ENCODE measurements at regions of chr11 and their contacts with region 1.

Region 1: DNA sequence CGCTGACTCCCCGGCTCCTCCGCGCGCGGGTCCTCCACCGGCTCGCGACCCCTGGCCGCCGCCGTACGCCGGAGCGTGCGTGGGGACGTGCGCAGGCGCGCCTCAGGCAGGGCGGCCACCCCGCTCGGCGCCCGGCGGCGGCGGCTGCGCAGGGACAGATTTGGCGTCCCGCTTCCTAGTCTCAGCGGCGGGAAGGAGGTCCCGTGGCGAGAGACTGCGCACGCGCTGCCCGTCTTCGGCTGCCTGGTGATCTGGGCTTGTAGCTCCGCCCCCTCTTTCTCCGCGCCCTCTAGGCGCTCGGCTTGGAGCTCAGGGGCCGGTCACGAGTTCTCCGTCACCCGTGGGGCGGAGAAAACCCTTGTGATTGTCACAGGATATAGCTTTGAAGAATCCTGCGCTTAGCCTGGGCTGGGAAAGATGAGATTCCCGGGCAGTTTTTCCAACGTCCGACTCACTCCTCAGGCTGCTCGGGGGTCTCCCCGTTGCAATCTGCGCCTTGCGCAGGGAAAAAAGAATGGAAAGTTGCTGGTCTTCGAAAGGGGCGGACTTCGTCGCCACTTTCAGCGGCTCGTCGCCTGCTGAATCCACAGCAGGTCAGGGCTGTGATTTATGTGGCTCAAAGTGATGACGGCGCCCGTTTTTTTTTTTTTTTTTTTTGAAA is at the start of gene PATL1:
- DNase-seq: peak; percentile 98 to 100 (median 99)
- ATAC-seq: peak; percentile 88
- H3K4me3 ChIP-seq: peak within 1 kb of the TSS; percentile 95
- H3K4me3 Mint-ChIP-seq: peak within 1 kb of the TSS; percentile 99
- H3K27ac ChIP-seq: peak within 1 kb of the TSS; percentile 98
- H3K27ac Mint-ChIP-seq: peak within 1 kb of the TSS; percentile 99
- H3K4me1 ChIP-seq: peaks cover 36% of the 10 kb centered on the region
- H3K4me1 Mint-ChIP-seq: peaks cover 52% of the 10 kb centered on the region
- H3K27me3 ChIP-seq: no peaks in the 10 kb centered on the region
- H3K27me3 Mint-ChIP-seq: no peaks in the 10 kb centered on the region
- CTCF ChIP-seq: no peak
- total RNA-seq, gene PATL1: 51.8 to 55.2 TPM

Region 2: GRCh38 chr11:59142530-59143507 is 526.3 kb before region 1 on chr11 and contains the start of gene FAM111A:
- CTCF ChIA-PET with region 1: no interaction called
- POLR2A ChIA-PET with region 1: interaction called, 4 read pairs
- intact Hi-C with region 1: loop called in 1 of 2 experiments (anchors 10 kb)
- DNase-seq: peak; percentile 67 to 95 (median 82)
- ATAC-seq: peak; percentile 81
- H3K4me3 ChIP-seq: peak within 1 kb of the TSS; percentile 79
- H3K4me3 Mint-ChIP-seq: peak within 1 kb of the TSS; percentile 94
- H3K27ac ChIP-seq: peak within 1 kb of the TSS; percentile 80 to 91
- H3K27ac Mint-ChIP-seq: peak within 1 kb of the TSS; percentile 90
- H3K4me1 ChIP-seq: peaks cover 23% of the 10 kb centered on the region
- H3K4me1 Mint-ChIP-seq: peaks cover 50% of the 10 kb centered on the region
- H3K27me3 ChIP-seq: no peaks in the 10 kb centered on the region
- H3K27me3 Mint-ChIP-seq: no peaks in the 10 kb centered on the region
- CTCF ChIP-seq: no peak
- total RNA-seq, gene FAM111A: 32.8 to 34.4 TPM

Region 3: DNA sequence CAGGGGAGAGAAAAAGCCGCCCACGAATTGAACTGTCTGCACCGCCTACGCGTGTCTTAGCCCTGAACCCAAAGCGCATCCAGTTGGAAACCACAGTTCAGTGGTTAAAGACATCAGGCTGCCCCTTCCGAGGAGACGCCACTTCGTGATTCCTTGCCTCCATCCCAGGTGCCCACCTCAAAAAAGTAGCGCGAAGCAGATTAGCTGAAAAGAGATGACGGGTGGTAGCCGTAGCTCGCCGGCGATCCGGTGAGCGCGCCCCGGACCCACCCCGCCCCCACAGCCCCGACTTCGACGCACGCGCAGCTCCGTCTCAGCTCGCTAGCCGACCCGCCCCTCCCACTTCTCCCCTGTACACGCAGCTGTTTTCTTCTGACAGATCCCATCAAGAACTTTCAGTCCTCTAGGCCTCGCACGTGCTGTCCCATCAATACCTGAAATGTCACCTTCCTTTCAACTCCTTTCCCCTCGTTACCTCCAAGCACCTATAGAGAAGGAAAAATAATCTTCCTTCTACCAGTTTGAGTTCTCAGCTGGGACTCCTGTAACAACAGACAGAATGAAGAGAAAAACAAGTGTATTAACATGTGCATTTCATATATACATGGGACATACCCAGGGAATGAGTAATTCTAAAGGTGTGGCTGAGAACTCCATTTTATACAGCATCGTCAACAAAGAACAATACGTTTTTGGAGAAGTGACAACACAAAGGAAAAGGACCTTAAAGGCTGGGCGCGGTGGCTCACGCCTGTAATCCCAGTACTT is 108.2 kb before region 1 on chr11:
- CTCF ChIA-PET with region 1: no interaction called
- POLR2A ChIA-PET with region 1: interaction called, 15 read pairs
- intact Hi-C with region 1: loop called in 1 of 2 experiments (anchors 5 kb)
- DNase-seq: peak; percentile 70 to 92 (median 80)
- ATAC-seq: peak; percentile 71
- H3K4me3 ChIP-seq: peak overlapping the region; percentile 92
- H3K4me3 Mint-ChIP-seq: peak overlapping the region; percentile 97
- H3K27ac ChIP-seq: peak overlapping the region; percentile 71 to 73
- H3K27ac Mint-ChIP-seq: peak overlapping the region; percentile 92
- H3K4me1 ChIP-seq: peaks cover 45% of the 10 kb centered on the region
- H3K4me1 Mint-ChIP-seq: peaks cover 50% of the 10 kb centered on the region
- H3K27me3 ChIP-seq: no peaks in the 10 kb centered on the region
- H3K27me3 Mint-ChIP-seq: peaks cover 10% of the 10 kb centered on the region
- CTCF ChIP-seq: no peak

Region 4: GRCh38 chr11:59753650-59754493 is 84.8 kb after region 1 on chr11:
- CTCF ChIA-PET with region 1: interaction called, 6 read pairs
- POLR2A ChIA-PET with region 1: interaction called, 4 read pairs
- intact Hi-C with region 1: loop called in 1 of 2 experiments (anchors 5 kb)
- DNase-seq: peak; percentile 67 to 89 (median 78)
- ATAC-seq: peak; percentile 63
- H3K4me3 ChIP-seq: peak overlapping the region; percentile 89
- H3K4me3 Mint-ChIP-seq: peak overlapping the region; percentile 93
- H3K27ac ChIP-seq: no peak overlapping the region
- H3K27ac Mint-ChIP-seq: peak overlapping the region; percentile 40
- H3K4me1 ChIP-seq: peaks cover 28% of the 10 kb centered on the region
- H3K4me1 Mint-ChIP-seq: peaks cover 26% of the 10 kb centered on the region
- H3K27me3 ChIP-seq: peaks cover 6 to 16% of the 10 kb centered on the region in 2 experiments
- H3K27me3 Mint-ChIP-seq: peaks cover 18% of the 10 kb centered on the region
- CTCF ChIP-seq: peak; percentile 96

Region 5: DNA sequence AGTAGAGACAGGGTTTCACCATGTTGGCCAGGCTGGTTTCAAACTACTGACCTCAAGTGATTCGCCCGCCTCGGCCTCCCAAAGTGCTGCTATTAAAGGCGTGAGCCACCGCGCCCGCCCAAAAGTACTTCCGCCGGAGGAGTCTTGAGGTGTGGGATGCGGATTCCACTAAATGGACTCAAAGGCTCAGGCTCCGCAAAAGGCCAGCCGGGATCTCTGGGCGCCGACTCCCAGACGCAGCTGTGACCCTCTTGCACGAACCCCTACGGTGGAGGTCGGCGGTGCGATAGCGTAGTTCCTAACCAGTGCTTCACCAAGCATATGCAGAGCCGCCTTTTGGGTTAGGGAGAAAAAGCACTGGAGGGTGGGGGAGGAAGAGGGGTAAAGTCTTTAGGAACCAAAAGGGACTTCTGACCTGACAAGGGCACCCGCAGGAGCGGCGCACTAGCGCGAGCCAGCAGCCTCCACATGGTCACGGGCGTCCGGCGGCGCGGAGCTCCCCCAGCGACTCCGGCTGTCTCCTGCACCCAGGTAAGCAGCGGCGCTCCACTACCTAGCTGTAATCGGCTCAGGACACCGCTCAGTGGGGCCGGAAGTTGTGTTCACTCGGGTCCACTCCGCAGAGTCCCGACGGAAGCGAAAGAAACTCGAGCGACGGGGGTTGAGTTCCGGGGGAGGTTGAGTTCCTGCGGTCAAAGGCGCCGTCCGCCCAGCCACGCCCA is 141.3 kb after region 1 on chr11 and contains the start of gene MRPL16:
- CTCF ChIA-PET with region 1: no interaction called
- POLR2A ChIA-PET with region 1: interaction called, 23 read pairs
- intact Hi-C with region 1: loop called in 1 of 2 experiments (anchors 5 kb)
- DNase-seq: peak; percentile 84 to 95 (median 88)
- ATAC-seq: peak; percentile 99
- H3K4me3 ChIP-seq: peak within 1 kb of the TSS; percentile 93
- H3K4me3 Mint-ChIP-seq: peak within 1 kb of the TSS; percentile 95
- H3K27ac ChIP-seq: peak within 1 kb of the TSS; percentile 53 to 65
- H3K27ac Mint-ChIP-seq: peak within 1 kb of the TSS; percentile 93
- H3K4me1 ChIP-seq: peaks cover 25% of the 10 kb centered on the region
- H3K4me1 Mint-ChIP-seq: peaks cover 33% of the 10 kb centered on the region
- H3K27me3 ChIP-seq: no peaks in the 10 kb centered on the region
- H3K27me3 Mint-ChIP-seq: peaks cover 3% of the 10 kb centered on the region
- CTCF ChIP-seq: peak; percentile 12
- total RNA-seq, gene MRPL16: 22.8 to 24.6 TPM